Caco-2 (cell line): ENCODE measurements at regions of chr19 and their contacts with region 1.

Region 1: DNA sequence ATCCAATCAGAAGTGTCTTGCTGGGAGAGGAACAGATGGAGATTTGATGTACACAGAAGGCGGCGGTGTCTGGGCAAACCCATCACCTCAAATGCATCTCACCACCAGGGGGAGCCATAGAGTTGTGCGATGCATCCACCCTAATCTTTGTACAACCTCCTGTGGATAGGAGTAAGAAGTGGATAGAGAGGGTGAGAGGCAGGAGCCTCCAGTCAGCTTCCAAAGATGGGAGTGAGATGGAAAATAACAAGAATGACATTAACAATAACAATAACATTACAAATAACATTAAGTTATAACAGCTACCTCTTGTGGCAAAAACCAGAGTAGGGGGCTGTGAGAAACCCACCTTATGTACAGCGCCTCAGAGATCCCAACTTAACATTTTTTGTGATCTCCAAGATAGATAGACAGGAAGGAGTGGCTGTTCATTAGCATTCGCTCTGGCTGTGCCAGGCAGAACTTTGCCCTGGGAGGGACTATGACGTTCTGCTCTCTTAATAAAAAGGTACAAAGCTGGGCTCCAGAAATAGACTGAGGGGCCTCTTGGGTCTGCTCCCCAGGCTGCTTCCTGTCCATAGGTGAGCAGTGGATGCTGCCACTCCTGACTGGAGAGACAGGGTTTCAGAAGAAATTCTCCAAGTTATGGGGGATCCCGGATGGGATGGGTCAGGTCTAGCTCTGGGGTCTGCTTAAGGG is 5.2 kb upstream of the CEACAM18 start:
- DNase-seq: peak; percentile 83 to 86
- H3K4me3 ChIP-seq: no peak overlapping the region
- H3K4me3 Mint-ChIP-seq: no peak overlapping the region
- H3K27ac Mint-ChIP-seq: no peak overlapping the region
- H3K4me1 ChIP-seq: peaks cover 29% of the 10 kb centered on the region
- H3K4me1 Mint-ChIP-seq: peaks cover 24% of the 10 kb centered on the region
- H3K27me3 ChIP-seq: no peaks in the 10 kb centered on the region
- H3K27me3 Mint-ChIP-seq: no peaks in the 10 kb centered on the region
- CTCF ChIP-seq: peak; percentile 81 to 88

Region 2: GRCh38 chr19:51282335-51282734 is 190.8 kb before region 1 on chr19:
- CTCF ChIA-PET with region 1: no interaction called
- POLR2A ChIA-PET with region 1: no interaction called
- intact Hi-C with region 1: no loop called
- DNase-seq: no peak
- H3K4me3 ChIP-seq: no peak overlapping the region
- H3K4me3 Mint-ChIP-seq: no peak overlapping the region
- H3K27ac Mint-ChIP-seq: no peak overlapping the region
- H3K4me1 ChIP-seq: no peaks in the 10 kb centered on the region
- H3K4me1 Mint-ChIP-seq: no peaks in the 10 kb centered on the region
- H3K27me3 ChIP-seq: no peaks in the 10 kb centered on the region; the same call in 1 of the 2 replicates
- H3K27me3 Mint-ChIP-seq: peaks cover 20% of the 10 kb centered on the region
- CTCF ChIP-seq: no peak

Region 3: DNA sequence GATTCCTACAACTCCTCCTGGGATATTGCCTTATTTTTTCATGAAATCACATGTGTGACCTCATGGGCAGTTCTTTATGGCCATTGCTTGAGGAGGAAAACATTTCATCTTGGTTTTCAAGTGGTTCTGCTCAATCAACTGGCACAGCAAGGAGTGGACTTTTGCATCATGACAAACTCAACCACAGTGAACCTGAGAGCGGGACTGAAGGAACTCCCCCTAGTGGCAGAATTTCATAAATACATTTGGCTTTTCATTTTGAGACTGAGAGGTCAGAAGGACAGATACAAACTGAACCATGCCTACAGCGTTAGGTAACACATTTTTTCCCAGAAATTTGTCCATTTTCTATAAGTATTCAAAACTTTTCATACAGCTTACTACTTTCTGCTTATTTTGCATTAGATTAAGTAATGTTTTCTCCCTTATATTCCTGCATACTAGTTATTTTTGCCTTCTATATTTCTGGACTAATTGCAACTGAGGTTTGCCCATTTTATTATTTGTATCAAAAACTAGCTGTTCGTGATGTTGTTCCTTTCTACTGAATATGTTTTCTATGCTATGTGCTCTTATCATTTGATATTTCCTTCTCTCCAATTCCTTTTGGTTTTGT is 41.8 kb after region 1 on chr19:
- CTCF ChIA-PET with region 1: interaction called, 3 read pairs
- POLR2A ChIA-PET with region 1: no interaction called
- intact Hi-C with region 1: loop called (anchors 1 kb)
- DNase-seq: peak in 1 of 2 experiments; percentile 71
- H3K4me3 ChIP-seq: no peak overlapping the region
- H3K4me3 Mint-ChIP-seq: no peak overlapping the region
- H3K27ac Mint-ChIP-seq: no peak overlapping the region
- H3K4me1 ChIP-seq: no peaks in the 10 kb centered on the region
- H3K4me1 Mint-ChIP-seq: no peaks in the 10 kb centered on the region
- H3K27me3 ChIP-seq: no peaks in the 10 kb centered on the region
- H3K27me3 Mint-ChIP-seq: peaks cover 5% of the 10 kb centered on the region
- CTCF ChIP-seq: peak; percentile 70 to 77